Astrocyte of the cerebellum (primary cell): ENCODE measurements at regions of chr1 and their contacts with region 1.

Region 1: DNA sequence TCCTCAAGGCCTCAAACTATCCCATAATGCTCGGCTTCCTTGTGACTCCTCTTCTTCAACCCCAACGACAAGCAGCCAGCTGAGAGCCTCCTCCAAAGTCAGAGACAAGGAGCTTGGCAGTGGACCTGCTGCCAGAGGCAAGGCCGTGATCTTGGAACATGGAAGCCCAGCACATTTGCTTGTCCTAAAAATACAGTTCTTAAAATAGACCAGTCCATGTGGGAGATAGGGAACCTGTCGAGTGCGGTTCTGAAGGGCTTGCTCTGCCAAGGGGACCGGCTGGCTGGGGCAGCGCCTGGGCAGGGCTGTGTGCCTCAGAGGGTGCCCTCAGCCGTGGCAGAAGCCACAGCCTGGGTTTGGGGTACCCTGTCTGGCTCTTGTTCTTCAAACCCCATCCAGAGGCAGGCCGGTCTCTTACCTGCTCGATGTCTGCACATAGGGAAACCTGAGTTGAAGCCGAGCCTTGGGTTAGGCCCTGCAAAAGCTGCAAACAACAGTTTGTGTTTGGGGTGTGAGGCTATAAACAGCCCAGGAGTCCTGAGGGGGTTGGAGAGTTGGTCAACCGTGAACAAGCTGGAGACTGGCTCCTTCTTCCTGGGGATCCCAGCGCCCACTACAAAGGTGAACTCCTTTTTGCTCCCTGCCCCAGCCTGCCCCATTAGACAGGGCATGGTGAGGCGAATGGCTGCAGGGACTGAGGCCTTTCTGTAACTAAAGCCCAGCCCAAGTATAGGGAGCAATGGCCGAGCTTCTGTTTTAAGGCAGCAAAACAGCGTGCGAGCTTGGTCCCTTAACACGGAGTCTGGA is 228.8 kb downstream of the CAMTA1 start:
- DNase-seq: no peak
- H3K4me3 ChIP-seq: no peak overlapping the region
- CTCF ChIP-seq: no peak

Region 2: GRCh38 chr1:7076572-7076971 is 62.5 kb after region 1 on chr1:
- in situ Hi-C with region 1: loop called (anchors 5 kb)
- DNase-seq: no peak
- H3K4me3 ChIP-seq: no peak overlapping the region
- CTCF ChIP-seq: no peak

Region 3: DNA sequence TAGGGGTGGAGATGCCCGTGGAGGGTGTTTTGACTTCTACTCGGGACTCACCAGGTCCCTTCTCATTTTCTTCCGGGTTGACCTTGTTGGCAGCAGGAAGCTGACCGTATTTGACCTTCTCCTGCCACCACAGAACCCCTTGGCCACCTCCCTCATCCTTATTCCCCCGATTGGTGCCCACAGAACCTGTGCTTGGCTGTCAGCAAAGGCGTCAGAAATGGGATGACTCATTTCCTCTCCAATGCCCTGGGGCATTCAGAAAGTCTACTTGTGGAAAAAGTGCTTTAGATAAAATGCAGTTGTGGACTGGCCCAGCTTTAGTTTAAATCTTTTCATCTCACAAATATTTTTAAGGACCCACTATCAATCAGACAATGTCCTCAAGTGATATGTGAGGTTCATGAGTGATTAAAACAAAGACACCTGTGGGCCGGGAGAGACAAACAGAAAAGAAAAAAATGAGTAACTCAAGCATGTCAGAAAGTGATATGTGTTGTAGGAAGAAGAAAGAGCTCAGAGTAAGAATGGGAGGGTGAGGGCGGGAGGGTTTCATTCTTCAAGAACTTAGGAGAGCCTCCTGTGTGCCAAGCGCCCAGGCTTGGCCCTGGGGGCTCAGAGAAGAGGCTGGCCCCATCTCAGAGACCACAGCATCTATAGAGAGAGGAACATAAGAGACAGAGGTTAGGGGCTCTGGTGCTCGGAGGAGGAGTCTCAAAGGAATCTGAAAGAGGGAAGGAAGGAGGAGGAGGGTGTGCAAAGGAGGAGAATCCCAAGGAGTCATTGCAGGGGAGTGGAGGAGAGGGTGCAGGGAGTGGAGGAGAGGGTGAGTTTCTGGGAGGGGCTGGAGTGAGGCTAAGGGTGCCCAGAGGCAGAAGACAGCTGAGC is 535.5 kb after region 1 on chr1:
- in situ Hi-C with region 1: no loop called
- DNase-seq: peak; percentile 56
- H3K4me3 ChIP-seq: no peak overlapping the region
- CTCF ChIP-seq: no peak